ENCODE measurements at regions of chr14 and their contacts with region 1.

Region 1: GRCh38 chr14:92748259-92749016 is at the start of gene LGMN:
- DNase-seq: peak; percentile 97
- H3K4me3 ChIP-seq: peak within 1 kb of the TSS; percentile 37 to 79 (median 66)
- H3K27ac ChIP-seq: peak within 1 kb of the TSS; percentile 59
- H3K4me1 ChIP-seq: peaks cover 7% of the 10 kb centered on the region
- H3K27me3 ChIP-seq: peaks cover 0 to 2% of the 10 kb centered on the region in 2 experiments
- CTCF ChIP-seq: no peak
- POLR2A ChIP-seq: peak; percentile 94
- total RNA-seq, gene LGMN: 56.7 and 62.6 TPM in 2 replicates

Region 2: GRCh38 chr14:92712654-92713051 is 35.8 kb before region 1 on chr14:
- CTCF ChIA-PET with region 1: interaction called, 10 read pairs
- POLR2A ChIA-PET with region 1: interaction called, 3 read pairs
- dilution Hi-C with region 1: no loop called
- intact Hi-C with region 1: loop called (anchors 1 kb)
- DNase-seq: no peak
- H3K4me3 ChIP-seq: no peak overlapping the region
- H3K27ac ChIP-seq: no peak overlapping the region
- H3K4me1 ChIP-seq: no peaks in the 10 kb centered on the region
- H3K27me3 ChIP-seq: no peaks in the 10 kb centered on the region
- CTCF ChIP-seq: no peak
- POLR2A ChIP-seq: no peak

Region 3: GRCh38 chr14:92728759-92729370 is 19.6 kb before region 1 on chr14:
- CTCF ChIA-PET with region 1: interaction called, 7 read pairs
- POLR2A ChIA-PET with region 1: interaction called, 27 read pairs
- dilution Hi-C with region 1: no loop called
- intact Hi-C with region 1: loop called (anchors 1 kb)
- DNase-seq: peak; percentile 20
- H3K4me3 ChIP-seq: no peak overlapping the region
- H3K27ac ChIP-seq: no peak overlapping the region
- H3K4me1 ChIP-seq: peaks cover 10% of the 10 kb centered on the region
- H3K27me3 ChIP-seq: no peaks in the 10 kb centered on the region
- CTCF ChIP-seq: no peak
- POLR2A ChIP-seq: no peak

Region 4: GRCh38 chr14:92846162-92846897 is 97.9 kb after region 1 on chr14:
- CTCF ChIA-PET with region 1: no interaction called
- POLR2A ChIA-PET with region 1: no interaction called
- dilution Hi-C with region 1: no loop called
- intact Hi-C with region 1: loop called (anchors 5 kb)
- DNase-seq: peak; percentile 73
- H3K4me3 ChIP-seq: no peak overlapping the region
- H3K27ac ChIP-seq: no peak overlapping the region
- H3K4me1 ChIP-seq: peaks cover 19% of the 10 kb centered on the region
- H3K27me3 ChIP-seq: no peaks in the 10 kb centered on the region
- CTCF ChIP-seq: no peak
- POLR2A ChIP-seq: no peak